ENCODE measurements at regions of chr13 and their contacts with region 1.

Region 1: DNA sequence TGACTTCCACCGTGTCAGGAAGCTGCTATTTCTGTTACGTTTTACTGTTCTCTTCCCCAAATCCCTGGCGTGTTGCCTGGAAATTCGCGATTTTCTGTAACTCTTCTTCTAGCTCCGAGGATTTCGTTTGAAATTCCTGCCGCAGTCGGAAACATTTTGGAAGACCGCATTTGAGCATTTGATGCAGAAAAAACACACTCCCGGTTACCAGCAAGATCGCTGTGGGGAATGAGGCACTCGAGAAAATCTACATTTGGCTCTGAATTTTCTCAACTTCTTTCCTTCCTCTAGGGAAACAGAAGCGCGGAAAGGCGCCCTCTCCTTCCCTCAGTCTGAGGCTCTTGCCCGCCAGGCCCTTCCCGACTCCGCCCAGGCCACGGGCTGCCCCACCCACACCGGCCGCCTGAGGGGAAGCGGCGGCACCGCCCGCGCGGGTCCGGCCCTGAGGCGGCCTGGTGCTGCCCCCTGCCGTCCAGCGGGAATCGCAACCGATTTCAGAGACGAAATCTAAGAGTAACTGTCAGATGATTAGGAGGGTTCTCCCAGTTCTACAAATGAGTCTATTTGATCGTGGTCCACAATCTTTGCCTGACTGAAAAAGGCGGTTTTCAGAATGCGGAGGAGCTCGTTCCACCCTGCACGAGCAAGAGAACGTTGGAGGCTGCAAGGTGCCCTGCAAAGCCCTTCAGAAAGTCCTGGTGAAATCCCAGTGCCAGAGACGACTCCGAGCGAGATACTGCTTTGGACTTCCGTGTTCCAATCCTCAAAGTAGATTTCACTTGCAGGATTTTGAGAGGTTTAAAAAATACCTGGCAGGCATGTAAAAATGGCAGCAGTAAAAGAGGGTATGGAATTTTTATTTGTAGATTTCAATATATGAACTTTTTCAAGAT is 18.4 kb upstream of the TUBGCP3 start:
- DNase-seq: peak; percentile 82 to 99 (median 93)

Region 2: DNA sequence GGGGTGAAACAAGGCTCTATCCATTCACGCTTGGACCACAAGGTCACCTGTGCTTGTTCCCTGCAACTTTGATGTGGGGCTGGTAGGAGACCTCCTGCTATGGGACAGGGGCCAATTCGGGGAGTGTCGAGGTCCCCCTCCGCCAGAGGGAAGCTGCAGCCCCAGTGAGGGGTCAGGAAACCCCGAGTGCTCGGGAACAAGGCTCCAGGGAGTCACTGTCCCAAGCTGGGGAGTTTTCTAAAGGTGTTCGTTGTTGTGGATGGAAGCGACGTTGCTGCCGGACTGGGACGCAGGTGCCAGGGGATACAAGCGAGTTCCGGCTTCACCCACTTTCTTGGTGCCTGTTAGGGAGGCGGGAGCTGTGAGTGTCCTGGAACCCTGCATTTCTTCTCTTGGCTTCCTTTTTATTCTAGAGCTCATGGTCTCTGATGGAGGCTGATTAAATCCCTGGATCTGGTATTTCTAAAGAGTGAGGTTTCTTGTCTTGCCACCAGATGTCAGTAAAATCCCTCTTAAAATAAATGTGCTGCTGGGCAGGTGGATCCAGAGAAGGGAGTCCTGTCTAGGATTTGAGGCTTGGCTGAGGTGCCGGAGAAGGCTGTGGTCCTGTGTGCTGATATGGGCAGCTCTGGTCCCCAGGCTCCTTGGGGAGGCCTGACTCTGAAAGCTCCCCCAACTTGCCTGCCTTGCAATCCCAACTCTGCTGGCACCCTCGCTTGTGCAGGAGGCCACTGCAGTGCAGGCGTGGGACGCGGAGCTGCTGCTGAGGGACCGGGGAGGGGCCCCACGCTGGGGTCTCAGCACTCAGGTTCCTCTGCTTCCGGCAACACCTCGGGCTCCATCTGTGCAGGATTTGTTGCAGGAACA is 1132.0 kb before region 1 on chr13:
- intact Hi-C with region 1: loop called (anchors 5 kb)
- DNase-seq: no peak

Region 3: GRCh38 chr13:111992911-111993310 is 613.4 kb before region 1 on chr13:
- intact Hi-C with region 1: no loop called
- DNase-seq: no peak

Region 4: GRCh38 chr13:112443995-112444860 is 162.1 kb before region 1 on chr13:
- intact Hi-C with region 1: loop called (anchors 10 kb)
- DNase-seq: peak; percentile 46 to 96 (median 76)

Region 5: DNA sequence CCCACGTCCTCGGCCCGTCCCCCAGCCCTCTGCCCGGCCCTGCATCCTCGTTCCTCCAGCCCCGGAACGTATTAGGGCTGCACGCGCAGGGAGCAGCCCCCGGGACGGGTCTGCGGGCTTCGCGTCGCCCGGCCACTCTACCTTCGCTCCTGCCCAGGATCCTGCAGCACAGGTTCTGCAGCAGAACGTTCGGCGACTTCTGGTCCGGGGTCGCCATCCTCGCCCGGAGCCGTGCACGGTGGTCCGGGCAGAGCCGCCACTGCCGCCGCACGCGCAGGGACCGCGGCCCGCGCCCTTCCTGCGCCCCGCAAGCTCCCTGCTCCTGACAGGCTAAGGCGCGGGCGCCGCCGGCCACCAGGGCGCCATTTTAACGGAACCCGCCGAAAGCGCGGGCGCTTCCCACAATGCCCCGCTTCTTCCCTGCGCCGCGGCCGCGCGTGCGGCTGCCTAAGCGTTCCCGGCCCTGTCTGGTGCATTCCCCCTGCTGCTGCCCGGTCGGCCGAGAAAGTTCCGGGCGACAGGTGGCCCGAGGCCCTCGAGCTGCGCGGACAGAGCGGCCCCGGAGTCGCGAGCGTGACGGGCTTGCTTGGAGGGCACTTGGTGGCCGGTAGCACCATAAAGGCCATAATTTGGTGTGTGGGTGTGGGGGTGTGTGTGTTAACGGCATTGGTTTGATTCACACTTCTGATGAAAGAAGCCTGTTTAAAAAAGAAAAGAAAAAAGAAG is 18.4 kb before region 1 on chr13 and contains the start of gene TUBGCP3:
- intact Hi-C with region 1: loop called (anchors 2 kb)
- DNase-seq: peak; percentile 73 to 96 (median 82)

Region 6: GRCh38 chr13:112626124-112626523 is 19.8 kb after region 1 on chr13:
- intact Hi-C with region 1: no loop called
- DNase-seq: peak in 1 of 10 donors; percentile 18

Region 7: DNA sequence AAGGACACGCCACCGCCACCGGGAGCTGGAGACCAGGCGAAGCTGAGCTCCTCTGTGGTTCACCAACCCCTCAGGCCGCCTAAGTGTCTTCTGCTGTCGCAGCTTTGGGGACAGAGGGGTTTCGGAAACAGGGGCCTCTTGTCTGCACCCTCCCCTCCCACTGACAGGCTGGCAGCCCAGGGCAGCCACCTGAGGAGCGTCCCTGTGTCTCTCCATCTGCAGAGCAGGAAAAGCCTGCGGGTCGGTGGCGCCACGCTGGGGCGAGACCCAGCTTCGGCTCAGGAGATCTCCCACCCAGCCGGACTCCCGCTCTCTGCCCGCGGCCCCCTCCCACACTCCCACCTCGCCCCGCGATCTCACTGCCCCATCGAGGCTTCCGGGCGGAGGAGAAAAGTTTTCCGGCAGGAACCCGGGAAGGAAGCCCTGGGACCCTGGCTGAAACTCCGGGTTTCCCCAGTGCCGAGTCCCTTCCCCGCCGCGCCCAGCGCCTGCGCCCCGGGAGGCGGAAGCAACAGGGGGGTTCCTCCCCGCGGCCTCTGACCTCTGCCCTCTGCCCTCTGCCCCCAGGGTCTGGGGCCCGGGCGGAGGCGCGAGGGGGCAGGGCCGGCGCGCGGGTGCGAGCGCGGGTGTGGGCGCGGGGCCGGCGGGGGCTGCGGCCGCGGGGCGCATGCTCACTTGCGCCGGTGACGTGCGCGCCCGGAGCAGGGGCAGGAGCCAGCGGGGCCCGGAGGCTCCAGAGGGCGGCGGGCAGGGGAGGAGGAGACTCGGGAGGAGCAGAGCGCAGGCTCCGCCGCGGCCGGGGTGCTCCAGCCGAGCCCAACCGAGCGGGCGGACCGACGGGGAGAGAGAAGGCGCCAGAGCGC is 83.2 kb after region 1 on chr13 and contains the start of gene ATP11A:
- intact Hi-C with region 1: loop called (anchors 10 kb)
- DNase-seq: peak; percentile 83 to 99 (median 90)

Measured in posterior cingulate gyrus (tissue), 11 donors.